ENCODE measurements at regions of chr22 and their contacts with region 1.

Region 1: DNA sequence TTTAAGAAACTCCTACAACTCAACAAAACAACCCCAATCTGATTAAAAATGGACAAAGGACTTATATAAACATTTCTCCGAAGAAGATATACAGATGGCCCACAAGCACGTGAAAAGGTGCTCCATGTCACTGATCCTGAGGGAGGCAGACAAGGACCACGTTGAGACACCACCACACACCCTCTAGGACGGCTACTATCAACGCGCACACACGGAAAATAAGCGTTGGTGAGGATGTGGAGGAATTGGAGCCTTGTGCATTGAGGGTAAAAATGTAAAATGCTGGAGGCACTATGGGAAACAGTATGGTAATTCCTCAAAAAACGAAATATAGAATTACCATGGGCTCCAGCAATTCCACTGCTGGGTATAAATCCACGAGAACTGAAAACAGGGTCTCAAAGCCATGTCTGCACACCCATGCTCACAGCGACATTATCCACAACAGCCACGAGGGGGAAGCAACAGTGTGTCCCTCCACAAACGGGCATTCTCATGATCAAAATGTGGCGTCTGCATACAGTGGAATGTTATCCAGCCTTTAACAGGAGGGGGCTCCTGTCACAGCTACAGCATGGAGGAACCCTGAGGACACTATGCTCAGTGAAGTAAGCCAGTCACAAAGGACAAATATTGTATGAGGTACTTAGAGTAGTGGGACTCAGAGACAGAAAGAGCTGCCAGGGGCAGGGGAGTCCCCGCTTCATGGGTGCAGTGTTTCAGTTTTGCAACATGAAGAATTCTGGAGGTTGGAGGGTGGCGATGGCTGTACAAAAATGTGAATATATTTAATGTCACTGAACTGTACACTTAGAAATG is 22.5 kb downstream of the YPEL1 start:
- DNase-seq: peak; percentile 44 to 95 (median 72)

Region 2: DNA sequence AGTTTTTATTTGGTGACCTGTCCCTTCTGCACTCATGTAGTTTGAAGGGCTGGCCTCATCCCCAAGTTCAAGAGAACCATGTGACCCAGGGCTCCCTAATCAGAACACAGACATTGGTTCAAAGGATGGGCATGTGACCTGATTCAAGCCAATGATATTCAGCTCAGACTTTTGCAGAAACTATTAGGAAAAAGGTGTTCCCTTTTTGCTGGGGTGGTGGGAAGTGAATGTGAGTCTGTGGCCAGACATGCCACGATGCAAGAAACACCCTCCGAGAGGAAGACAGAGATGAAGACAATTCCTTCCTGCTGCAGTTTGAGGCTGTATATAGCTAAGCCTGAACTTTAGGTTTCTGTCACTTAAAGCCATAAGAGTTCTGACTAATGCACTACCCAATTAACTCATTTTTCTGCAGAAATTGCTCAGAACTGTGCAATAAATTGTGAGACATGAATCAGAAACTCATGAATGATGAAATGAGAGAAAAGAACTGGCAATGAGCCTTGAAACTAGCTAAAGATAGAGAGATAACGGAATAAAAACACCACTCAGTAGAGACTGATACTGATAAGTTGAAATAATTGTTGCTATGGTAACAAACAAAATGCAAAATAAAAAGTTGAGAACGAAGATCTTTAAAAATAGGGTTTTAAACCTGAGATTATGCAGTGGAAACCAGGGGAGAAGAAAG is 163.5 kb after region 1 on chr22:
- intact Hi-C with region 1: loop called (anchors 10 kb)
- DNase-seq: no peak

Region 3: DNA sequence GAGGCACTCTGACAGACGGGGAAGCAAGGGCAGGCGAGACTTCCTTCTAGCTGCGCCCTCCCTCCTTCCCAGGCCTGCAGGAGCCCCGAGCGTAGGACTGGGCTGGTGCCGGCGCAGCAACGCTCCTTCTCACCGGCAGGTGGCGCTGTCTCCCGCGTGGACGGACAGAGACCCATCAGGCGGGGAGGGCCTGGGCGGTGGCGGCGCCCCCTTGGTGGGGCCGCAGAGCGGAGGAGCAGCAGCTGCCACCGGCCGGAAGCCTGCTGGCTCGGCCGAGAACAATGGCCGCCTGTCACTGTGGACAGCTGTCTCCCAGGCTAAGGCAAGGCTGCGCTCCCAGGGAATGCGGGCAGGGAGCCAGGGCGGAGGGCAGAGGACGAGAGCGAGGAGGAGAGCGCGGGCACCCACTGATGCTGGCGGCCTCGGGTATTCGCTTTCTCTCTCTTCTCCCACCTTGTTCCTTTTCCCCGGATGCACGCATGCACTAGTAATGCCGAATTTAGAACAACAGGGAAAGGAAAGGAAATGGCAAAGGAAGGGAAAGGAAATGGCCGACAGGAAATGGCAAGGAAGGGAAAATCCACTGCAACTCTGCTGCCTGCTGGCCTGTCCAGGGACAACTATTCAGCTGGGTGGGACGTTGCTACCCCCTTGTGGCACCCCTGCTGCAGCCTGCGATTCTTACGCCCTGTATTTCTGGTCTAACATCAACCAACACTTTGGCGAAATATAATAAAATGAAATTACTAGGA is 225.1 kb after region 1 on chr22:
- intact Hi-C with region 1: loop called (anchors 1 kb)
- DNase-seq: peak; percentile 90 to 99 (median 97)

Region 4: DNA sequence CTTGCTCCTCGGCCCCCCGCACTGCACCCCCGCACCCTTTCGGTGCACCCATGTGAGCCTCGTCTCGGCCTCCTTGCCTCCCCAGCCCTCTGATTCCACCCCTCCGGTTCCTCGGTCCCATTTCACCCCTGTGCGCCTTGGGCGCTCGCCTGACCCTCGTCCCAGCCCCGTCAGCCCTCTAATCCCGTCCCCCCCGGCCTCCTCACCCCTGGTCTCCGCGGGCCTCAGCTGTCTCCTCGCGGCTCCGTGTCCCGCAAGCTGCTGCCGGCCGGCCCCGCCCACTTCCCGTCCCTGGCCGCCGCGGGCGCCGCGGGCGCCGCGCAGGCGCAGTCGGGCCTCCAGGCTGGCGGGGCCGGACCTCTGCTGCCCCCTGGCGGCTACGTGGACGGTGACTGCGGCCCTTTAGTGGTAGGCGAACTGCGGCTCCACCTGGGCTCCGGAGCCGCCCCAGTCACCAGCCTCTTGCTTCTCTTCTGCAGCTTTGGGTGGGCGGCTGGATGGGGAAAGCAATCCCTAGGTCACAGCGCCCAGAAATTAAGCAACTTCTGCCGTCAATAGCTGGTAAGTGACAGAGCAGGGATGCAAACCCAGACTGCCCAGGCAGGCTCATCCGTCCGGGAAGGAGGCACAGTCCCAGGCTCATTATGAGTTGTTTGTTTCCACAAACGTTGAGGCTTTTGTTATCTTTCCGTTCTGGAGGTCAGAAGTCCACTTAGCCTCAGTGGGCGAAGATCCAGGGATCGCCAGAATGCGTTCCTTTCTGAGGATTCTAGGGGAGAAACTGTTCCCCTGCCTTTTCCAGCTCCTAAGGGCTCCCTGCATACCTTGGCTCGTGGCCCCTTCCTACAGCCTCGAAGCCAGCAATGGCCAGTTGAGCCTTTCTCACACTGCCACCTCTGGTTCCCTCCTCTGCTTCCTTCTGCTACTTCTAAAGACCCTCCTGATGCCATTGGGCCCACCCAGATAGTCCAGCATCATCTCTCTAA is 239.8 kb after region 1 on chr22 and contains the start of gene PPM1F:
- intact Hi-C with region 1: loop called (anchors 2 kb)
- DNase-seq: peak; percentile 73 to 97 (median 80)